ENCODE measurements at regions of chr12 and their contacts with region 1.

Region 1: DNA sequence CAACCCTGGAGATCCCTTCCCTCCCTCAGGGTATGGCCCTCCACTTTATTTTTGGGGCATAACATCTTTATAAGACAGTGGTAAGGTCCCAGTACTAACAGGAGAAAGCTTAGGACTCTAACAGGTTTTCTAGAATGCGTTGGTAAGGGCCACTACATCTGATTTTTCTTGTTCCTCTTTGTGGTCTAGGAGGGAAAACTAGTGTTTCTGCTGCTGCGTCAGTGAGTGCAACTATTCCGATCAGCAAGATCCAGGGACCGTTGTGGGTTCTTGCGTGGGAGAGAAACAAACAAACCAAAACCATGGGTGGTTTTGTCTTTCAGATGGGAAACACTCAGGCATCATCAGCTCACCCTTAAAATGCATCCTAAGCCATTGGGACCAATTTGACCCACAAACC is 123.6 kb upstream of the SLC16A7 start:
- DNase-seq: no peak
- ATAC-seq: peak; percentile 71
- H3K4me3 Mint-ChIP-seq: no peak overlapping the region
- H3K27ac Mint-ChIP-seq: no peak overlapping the region
- H3K4me1 Mint-ChIP-seq: peaks cover 17% of the 10 kb centered on the region
- H3K27me3 Mint-ChIP-seq: no peaks in the 10 kb centered on the region
- CTCF ChIP-seq: no peak

Region 2: DNA sequence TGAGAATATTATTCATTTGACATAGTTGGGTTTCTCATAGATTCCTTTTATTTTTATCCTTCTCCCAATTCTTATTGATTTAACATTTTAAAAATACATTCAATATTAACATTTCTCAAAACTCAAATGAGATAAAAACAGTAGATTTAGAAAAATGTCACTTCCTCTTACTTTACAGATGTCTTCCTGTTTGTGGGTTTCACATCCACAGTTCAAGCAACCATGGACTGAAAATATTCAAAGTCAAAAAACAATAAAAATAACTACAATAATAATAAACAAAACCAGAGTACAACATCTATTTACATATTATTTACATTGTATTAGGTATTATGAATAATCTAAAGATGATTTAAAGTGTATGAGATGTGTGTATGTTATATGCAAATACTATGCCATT is 12.3 kb after region 1 on chr12:
- CTCF ChIA-PET with region 1: no interaction called
- POLR2A ChIA-PET with region 1: interaction called, 6 read pairs
- intact Hi-C with region 1: loop called (anchors 1 kb)
- DNase-seq: no peak
- ATAC-seq: no peak
- H3K4me3 Mint-ChIP-seq: no peak overlapping the region
- H3K27ac Mint-ChIP-seq: no peak overlapping the region
- H3K4me1 Mint-ChIP-seq: peaks cover 27% of the 10 kb centered on the region
- H3K27me3 Mint-ChIP-seq: peaks cover 1% of the 10 kb centered on the region
- CTCF ChIP-seq: no peak

Measured in activated B cell treated with CpG ODN at 0.5 μM for 24 hours (primary cell).